Spleen (tissue), 13 donors: ENCODE measurements at regions of chr3 and their contacts with region 1.

Region 1: GRCh38 chr3:37967260-37967881 is 23.2 kb upstream of the VILL start:
- DNase-seq: no peak
- H3K4me3 ChIP-seq: no peak overlapping the region
- H3K27ac ChIP-seq: peak overlapping the region in 4 of 8 donors; percentile 65 to 83 (median 74)
- H3K4me1 ChIP-seq: peaks cover 9 to 54% (median 32%) of the 10 kb centered on the region in 6 donors
- H3K27me3 ChIP-seq: no peaks in the 10 kb centered on the region
- CTCF ChIP-seq: peak; percentile 25 to 81 (median 73)
- POLR2A ChIP-seq: no peak

Region 2: DNA sequence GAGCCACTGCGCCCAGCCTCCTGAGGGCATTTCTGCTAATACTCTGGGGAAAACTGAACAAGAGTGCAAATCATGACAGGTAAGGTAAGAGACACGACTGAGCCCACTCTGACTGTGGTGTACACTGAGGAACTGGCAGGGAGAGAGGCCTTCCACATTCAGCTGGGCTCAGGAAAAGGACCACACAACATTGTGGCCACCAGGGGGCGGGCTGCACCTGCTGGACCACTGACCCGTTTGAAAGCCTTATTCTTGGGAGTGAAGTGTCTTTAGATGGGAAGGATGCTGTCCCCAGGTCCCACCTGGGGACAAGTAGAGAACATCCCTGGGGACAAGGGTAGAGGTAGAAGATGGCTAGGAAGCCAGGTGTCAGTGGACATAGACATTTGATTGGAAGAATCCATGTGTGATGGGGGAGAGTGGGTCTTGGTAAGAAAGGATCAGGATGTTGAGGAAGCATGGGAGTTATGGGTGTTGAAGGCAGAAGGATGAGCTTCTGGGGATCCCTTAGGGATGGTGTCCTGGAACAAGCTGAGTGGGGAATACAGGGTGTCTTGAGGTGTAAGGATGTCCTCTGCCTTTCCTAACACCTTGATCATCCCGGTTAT is 111.9 kb before region 1 on chr3:
- intact Hi-C with region 1: loop called (anchors 5 kb)
- DNase-seq: peak; percentile 94
- H3K4me3 ChIP-seq: no peak overlapping the region
- H3K27ac ChIP-seq: no peak overlapping the region
- H3K4me1 ChIP-seq: peaks cover 0 to 13% (median 7%) of the 10 kb centered on the region in 6 donors
- H3K27me3 ChIP-seq: peaks cover 0 to 10% (median 0%) of the 10 kb centered on the region in 7 donors
- CTCF ChIP-seq: peak; percentile 73 to 94 (median 89)
- POLR2A ChIP-seq: no peak